ENCODE measurements at regions of chr2 and their contacts with region 1.

Region 1: DNA sequence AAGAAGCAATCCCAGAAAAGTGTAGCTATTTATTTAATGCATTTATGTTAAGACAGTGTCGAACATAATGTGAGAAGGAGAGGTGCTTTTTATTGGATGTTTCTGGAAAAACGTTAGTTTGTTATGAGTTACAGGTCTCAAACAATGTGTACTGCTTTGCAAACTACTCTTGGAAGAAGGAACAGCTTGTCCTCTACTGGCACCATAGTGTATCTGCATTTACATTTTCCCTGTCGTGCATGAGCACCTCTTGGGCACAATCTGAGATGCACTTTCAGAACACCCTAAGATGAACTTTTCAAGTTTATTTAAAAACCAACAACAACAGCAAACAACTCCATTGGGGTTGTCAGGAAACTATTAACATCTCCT is 22.8 kb downstream of the CCNYL1 start:
- DNase-seq: peak in 1 of 2 experiments; percentile 55
- H3K4me3 ChIP-seq: no peak overlapping the region
- H3K4me3 Mint-ChIP-seq: peak overlapping the region; percentile 52
- H3K27ac Mint-ChIP-seq: no peak overlapping the region
- H3K4me1 ChIP-seq: peaks cover 20% of the 10 kb centered on the region
- H3K4me1 Mint-ChIP-seq: peaks cover 19% of the 10 kb centered on the region
- H3K27me3 ChIP-seq: no peaks in the 10 kb centered on the region
- H3K27me3 Mint-ChIP-seq: no peaks in the 10 kb centered on the region
- CTCF ChIP-seq: peak in 1 of 2 experiments; percentile 67

Region 2: DNA sequence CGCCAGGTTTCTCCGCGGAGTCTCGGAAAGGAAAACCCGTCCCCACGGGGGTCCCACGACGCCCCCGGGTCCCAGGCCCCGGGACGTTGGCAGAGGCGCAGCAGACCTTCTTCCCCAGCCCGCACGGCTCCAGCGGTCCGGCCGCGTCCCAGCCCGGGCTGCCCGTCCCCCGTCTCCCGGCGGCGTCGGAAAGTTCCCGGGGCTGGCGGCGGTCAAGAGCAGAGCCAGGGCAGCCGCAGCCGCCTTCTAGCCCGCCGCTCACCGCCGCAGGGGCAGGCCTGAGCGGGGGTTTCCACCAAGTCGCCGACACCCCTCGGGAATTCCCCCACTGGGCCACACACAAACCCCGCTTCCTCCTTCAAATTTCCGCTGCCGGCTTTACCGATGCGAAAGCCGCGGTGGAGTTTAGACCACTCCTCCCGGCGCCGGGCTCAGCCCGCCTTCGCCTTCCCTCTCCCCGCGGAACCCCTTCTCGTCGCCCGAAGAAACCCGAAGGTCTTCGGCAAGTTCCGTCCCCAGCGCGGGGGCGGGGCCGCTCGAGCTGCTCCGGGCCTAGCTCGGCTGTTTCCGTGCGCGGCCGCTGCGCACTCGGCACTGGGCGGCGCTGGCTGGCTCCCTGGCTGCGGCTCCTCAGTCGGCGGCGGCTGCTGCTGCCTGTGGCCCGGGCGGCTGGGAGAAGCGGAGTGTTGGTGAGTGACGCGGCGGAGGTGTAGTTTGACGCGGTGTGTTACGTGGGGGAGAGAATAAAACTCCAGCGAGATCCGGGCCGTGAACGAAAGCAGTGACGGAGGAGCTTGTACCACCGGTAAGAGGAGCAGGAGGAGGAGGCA is 204.7 kb before region 1 on chr2 and contains the start of gene CREB1:
- CTCF ChIA-PET with region 1: no interaction called
- POLR2A ChIA-PET with region 1: no interaction called
- intact Hi-C with region 1: loop called (anchors 1 kb)
- DNase-seq: peak; percentile 98 to 100
- H3K4me3 ChIP-seq: peak within 1 kb of the TSS; percentile 89
- H3K4me3 Mint-ChIP-seq: peak within 1 kb of the TSS; percentile 78
- H3K27ac Mint-ChIP-seq: peak within 1 kb of the TSS; percentile 97
- H3K4me1 ChIP-seq: peaks cover 35% of the 10 kb centered on the region
- H3K4me1 Mint-ChIP-seq: peaks cover 21% of the 10 kb centered on the region
- H3K27me3 ChIP-seq: no peaks in the 10 kb centered on the region
- H3K27me3 Mint-ChIP-seq: no peaks in the 10 kb centered on the region
- CTCF ChIP-seq: no peak
- total RNA-seq, gene CREB1: 49.7 and 59.0 TPM in 2 replicates

Region 3: DNA sequence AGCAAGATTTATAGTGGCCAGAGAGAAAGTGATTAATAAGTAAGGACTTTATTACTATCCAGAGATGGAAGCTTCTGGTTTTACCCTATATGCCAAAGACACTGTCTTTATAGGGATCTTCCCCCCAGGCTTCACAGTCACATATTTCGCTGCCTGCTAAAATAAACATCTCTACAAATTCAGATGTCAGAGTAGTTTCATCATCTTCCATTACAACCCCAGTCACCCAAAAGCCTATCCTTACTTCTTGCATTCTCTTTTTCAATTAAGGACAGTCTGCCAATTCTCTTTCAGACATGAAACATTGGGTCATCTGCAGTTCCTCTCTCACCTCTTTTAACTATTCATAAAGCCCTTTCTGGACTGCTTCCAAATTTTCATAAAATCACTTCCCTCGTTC is 176.1 kb before region 1 on chr2:
- CTCF ChIA-PET with region 1: no interaction called
- POLR2A ChIA-PET with region 1: no interaction called
- intact Hi-C with region 1: loop called (anchors 10 kb)
- DNase-seq: no peak
- H3K4me3 ChIP-seq: no peak overlapping the region
- H3K4me3 Mint-ChIP-seq: no peak overlapping the region
- H3K27ac Mint-ChIP-seq: peak overlapping the region; percentile 34
- H3K4me1 ChIP-seq: peaks cover 22% of the 10 kb centered on the region
- H3K4me1 Mint-ChIP-seq: peaks cover 29% of the 10 kb centered on the region
- H3K27me3 ChIP-seq: no peaks in the 10 kb centered on the region
- H3K27me3 Mint-ChIP-seq: no peaks in the 10 kb centered on the region
- CTCF ChIP-seq: no peak

Region 4: DNA sequence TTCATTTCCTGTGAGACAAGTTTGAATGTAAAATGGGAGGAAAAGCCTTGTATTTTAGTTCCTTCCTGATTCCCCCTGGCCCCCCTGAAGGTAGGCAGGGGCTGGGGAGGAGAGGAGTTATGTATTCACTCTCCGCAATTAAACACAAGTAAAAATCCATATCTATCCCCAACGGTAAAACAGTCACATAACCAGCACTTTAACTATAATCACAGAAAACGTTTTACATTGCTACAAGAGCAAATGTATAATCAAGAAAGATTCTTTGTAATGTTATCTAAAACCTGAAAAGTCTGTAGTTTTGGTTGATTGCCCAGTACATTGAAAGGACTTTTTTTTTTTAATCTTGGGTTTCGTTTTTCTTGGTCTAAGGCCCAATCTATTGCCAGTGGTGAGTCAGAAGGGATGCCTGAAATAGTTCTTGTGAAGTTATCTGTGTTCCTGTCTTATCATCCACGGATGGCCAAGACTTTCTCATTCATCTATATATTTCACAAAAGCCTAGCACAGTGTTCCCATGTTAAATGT is 57.4 kb before region 1 on chr2:
- CTCF ChIA-PET with region 1: no interaction called
- POLR2A ChIA-PET with region 1: no interaction called
- intact Hi-C with region 1: loop called (anchors 1 kb)
- DNase-seq: peak; percentile 40 to 55
- H3K4me3 ChIP-seq: no peak overlapping the region
- H3K4me3 Mint-ChIP-seq: peak overlapping the region; percentile 65
- H3K27ac Mint-ChIP-seq: peak overlapping the region; percentile 96
- H3K4me1 ChIP-seq: peaks cover 34% of the 10 kb centered on the region
- H3K4me1 Mint-ChIP-seq: peaks cover 35% of the 10 kb centered on the region
- H3K27me3 ChIP-seq: no peaks in the 10 kb centered on the region
- H3K27me3 Mint-ChIP-seq: no peaks in the 10 kb centered on the region
- CTCF ChIP-seq: no peak

Region 5: GRCh38 chr2:207683879-207684627 is 50.2 kb before region 1 on chr2:
- CTCF ChIA-PET with region 1: no interaction called
- POLR2A ChIA-PET with region 1: interaction called, 4 read pairs
- intact Hi-C with region 1: loop called (anchors 2 kb)
- DNase-seq: peak; percentile 54 to 74
- H3K4me3 ChIP-seq: no peak overlapping the region
- H3K4me3 Mint-ChIP-seq: peak overlapping the region; percentile 16
- H3K27ac Mint-ChIP-seq: peak overlapping the region; percentile 83
- H3K4me1 ChIP-seq: peaks cover 23% of the 10 kb centered on the region
- H3K4me1 Mint-ChIP-seq: peaks cover 30% of the 10 kb centered on the region
- H3K27me3 ChIP-seq: no peaks in the 10 kb centered on the region
- H3K27me3 Mint-ChIP-seq: no peaks in the 10 kb centered on the region
- CTCF ChIP-seq: no peak

Region 6: DNA sequence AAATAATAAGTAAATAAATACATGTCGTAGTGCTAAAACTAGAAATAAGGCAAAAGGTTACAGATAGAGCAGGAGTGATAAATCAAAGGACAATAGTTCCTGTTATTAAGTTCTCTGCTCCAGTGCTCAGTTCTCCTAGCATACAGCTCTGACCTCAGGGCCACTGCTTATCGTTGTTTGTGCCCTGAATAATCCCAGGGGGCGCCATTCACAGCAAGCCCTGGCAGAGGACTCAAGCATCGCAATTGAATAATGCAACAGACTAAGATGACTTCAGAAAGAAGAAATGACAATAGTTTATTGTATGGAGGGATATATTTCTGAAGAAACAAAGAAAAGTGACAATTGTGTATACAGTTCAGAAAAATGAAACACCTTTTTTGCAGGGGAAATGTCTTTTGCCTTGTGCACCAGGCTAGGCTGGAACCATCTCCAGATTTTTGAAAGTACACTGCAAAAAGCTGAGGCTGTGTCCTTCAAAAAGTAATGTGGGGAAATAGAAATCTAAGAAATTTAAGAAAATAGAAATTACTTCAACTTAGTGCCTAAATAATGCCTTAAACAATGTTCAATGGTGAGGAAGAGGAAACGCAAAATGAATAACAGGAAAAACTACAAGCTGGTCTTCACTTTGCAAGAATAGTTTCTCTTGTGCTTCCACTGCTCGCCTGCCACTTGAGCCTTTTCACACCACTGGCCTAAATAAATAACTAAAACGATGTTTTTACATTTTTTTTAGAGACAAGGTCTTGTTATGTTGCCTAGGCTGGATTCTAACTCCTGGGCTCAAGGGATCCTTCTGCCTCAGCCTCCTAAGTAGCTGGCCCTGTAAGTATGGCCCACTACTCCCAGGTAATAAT is 41.8 kb before region 1 on chr2:
- CTCF ChIA-PET with region 1: interaction called, 6 read pairs
- POLR2A ChIA-PET with region 1: no interaction called
- intact Hi-C with region 1: loop called (anchors 1 kb)
- DNase-seq: peak; percentile 54 to 58
- H3K4me3 ChIP-seq: no peak overlapping the region
- H3K4me3 Mint-ChIP-seq: no peak overlapping the region
- H3K27ac Mint-ChIP-seq: no peak overlapping the region
- H3K4me1 ChIP-seq: no peaks in the 10 kb centered on the region
- H3K4me1 Mint-ChIP-seq: peaks cover under 1% of the 10 kb centered on the region
- H3K27me3 ChIP-seq: no peaks in the 10 kb centered on the region
- H3K27me3 Mint-ChIP-seq: no peaks in the 10 kb centered on the region
- CTCF ChIP-seq: peak; percentile 42 to 49

Region 7: GRCh38 chr2:207710814-207711740 is 23.2 kb before region 1 on chr2 and contains the start of gene CCNYL1:
- CTCF ChIA-PET with region 1: interaction called, 3 read pairs
- POLR2A ChIA-PET with region 1: interaction called, 9 read pairs
- intact Hi-C with region 1: loop called (anchors 1 kb)
- DNase-seq: peak; percentile 100
- H3K4me3 ChIP-seq: peak within 1 kb of the TSS; percentile 83
- H3K4me3 Mint-ChIP-seq: peak within 1 kb of the TSS; percentile 96
- H3K27ac Mint-ChIP-seq: peak within 1 kb of the TSS; percentile 88
- H3K4me1 ChIP-seq: peaks cover 14% of the 10 kb centered on the region; the same call in 1 of the 2 replicates
- H3K4me1 Mint-ChIP-seq: peaks cover 6% of the 10 kb centered on the region
- H3K27me3 ChIP-seq: no peaks in the 10 kb centered on the region
- H3K27me3 Mint-ChIP-seq: no peaks in the 10 kb centered on the region
- CTCF ChIP-seq: peak in 1 of 2 experiments; percentile 20
- total RNA-seq, gene CCNYL1: 39.4 and 40.7 TPM in 2 replicates

Region 8: DNA sequence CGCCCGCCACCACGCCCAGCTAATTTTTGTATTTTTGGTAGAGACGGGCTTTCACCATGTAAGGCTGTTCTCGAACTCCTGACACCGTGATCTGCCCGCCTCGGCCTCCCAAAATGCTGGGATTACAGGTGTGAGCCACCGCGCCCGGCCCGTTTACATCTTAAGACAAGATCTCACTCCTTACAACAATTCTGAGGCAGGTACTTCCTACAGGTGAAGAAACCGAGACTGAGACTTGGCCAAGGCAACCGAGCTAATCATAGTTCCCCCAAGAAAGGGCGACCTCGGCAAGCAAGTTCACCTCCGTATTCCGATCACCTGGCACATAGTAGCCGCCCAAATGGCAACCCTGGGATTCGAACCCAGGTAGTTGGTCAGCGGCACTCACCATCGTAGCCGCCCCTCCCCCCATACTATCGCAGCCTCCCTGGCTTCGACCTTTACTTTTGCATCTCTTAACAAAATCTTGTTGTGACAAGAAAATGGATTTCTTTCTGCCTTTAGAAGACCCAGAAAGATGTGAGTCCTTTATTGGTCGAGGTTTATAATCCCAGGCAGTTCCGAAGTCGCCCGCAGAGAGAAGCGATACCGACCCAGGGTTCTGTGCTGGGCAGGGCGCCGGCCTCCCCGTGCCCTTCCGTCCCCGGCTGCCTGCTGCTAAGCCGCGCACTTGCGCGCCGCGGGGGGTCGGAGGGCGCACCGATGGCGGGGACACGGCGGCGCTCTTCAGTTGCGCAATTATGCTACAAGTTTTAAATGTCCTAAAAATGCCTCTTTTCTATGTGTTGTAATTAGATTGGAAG is 36.6 kb after region 1 on chr2:
- CTCF ChIA-PET with region 1: no interaction called
- POLR2A ChIA-PET with region 1: no interaction called
- intact Hi-C with region 1: no loop called
- DNase-seq: no peak
- H3K4me3 ChIP-seq: no peak overlapping the region; the same call in 1 of the 2 replicates
- H3K4me3 Mint-ChIP-seq: peak overlapping the region; percentile 96
- H3K27ac Mint-ChIP-seq: peak overlapping the region; percentile 88
- H3K4me1 ChIP-seq: peaks cover 60% of the 10 kb centered on the region
- H3K4me1 Mint-ChIP-seq: peaks cover 41% of the 10 kb centered on the region
- H3K27me3 ChIP-seq: no peaks in the 10 kb centered on the region
- H3K27me3 Mint-ChIP-seq: no peaks in the 10 kb centered on the region
- CTCF ChIP-seq: no peak

Region 9: GRCh38 chr2:207807516-207807915 is 73.3 kb after region 1 on chr2:
- CTCF ChIA-PET with region 1: no interaction called
- POLR2A ChIA-PET with region 1: no interaction called
- intact Hi-C with region 1: no loop called
- DNase-seq: no peak
- H3K4me3 ChIP-seq: no peak overlapping the region
- H3K4me3 Mint-ChIP-seq: no peak overlapping the region
- H3K27ac Mint-ChIP-seq: no peak overlapping the region
- H3K4me1 ChIP-seq: peaks cover 44% of the 10 kb centered on the region
- H3K4me1 Mint-ChIP-seq: peaks cover 30% of the 10 kb centered on the region
- H3K27me3 ChIP-seq: no peaks in the 10 kb centered on the region
- H3K27me3 Mint-ChIP-seq: no peaks in the 10 kb centered on the region
- CTCF ChIP-seq: no peak